ENCODE measurements at regions of chr5 and their contacts with region 1.

Region 1: DNA sequence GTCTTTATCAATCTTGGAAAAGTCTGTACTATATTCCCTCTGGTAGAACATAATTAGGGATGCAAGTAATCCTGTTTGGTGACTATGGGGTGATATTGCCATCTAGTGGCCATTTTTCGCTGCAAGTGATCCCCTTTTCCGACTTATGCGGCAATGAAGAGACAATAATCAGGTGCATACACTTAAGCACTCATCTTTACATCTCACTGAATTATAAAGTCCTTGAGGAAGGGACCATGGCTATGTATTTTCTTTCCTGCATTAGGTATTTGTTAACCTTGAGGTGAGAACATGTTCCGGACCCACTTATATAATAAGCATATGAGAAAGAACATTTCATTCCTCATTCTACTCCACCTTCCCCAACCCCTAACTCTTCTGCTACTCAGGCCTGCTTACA is 19.6 kb upstream of the LIX1 start:
- DNase-seq: peak; percentile 44 to 61 (median 59)
- H3K4me3 ChIP-seq: no peak overlapping the region
- H3K4me3 Mint-ChIP-seq: no peak overlapping the region
- H3K27ac ChIP-seq: no peak overlapping the region
- H3K27ac Mint-ChIP-seq: peak overlapping the region in 4 of 7 donors; percentile 18 to 83 (median 45)
- H3K4me1 ChIP-seq: peaks cover 3% of the 10 kb centered on the region
- H3K4me1 Mint-ChIP-seq: peaks cover 3 to 18% (median 6%) of the 10 kb centered on the region in 4 donors
- H3K27me3 ChIP-seq: no peaks in the 10 kb centered on the region
- H3K27me3 Mint-ChIP-seq: no peaks in the 10 kb centered on the region

Region 2: DNA sequence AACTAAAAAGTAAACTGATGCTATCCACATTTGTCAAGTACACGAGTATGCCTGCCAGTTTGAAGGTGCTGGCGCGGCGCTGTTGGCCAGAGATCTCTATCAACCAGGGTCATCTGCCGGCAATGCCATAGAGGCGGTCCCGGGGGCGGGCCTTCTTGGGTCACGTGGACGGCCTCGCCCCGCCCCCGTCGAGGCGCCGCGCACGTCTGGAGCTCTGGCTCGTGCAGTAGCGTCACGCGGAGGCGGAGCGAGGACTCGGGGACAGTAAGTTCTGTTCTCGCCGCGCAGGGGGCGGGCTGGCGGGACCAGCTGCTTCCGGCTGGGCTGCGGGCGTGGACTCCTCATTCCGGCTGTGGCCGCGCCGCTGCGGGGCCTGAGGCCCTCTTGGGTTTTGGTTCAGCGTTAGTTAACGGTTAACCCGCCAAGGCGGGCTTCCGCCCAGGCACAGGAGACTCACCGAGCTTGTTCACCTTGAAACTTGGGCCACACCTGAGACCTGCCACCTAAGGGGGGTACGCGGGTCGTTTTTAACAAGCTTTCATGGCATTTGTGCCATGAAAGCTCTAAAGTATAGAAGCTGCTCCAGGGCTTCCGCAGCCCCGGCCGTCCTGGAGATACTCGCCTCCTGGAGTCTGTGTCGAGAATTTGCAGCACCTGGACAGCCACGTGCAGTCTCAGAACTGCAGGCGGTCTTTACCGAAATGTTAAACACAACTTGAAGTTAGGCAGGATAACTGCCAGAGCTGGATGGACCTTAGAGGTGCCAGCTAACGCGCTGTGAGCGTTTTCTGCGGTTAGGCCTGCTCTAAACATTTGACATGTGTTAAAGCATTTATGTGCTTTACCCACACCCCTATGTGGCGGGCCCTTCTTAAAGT is 1515.3 kb before region 1 on chr5 and contains the start of gene RFESD:
- CTCF ChIA-PET with region 1: no interaction called
- POLR2A ChIA-PET with region 1: no interaction called
- intact Hi-C with region 1: loop called (anchors 10 kb)
- DNase-seq: peak; percentile 91 to 95 (median 92)
- H3K4me3 ChIP-seq: peak within 1 kb of the TSS; percentile 71 to 94
- H3K4me3 Mint-ChIP-seq: peak within 1 kb of the TSS; percentile 87 to 93 (median 89)
- H3K27ac ChIP-seq: peak within 1 kb of the TSS; percentile 84
- H3K27ac Mint-ChIP-seq: peak within 1 kb of the TSS; percentile 57 to 94 (median 93)
- H3K4me1 ChIP-seq: peaks cover 31% of the 10 kb centered on the region
- H3K4me1 Mint-ChIP-seq: peaks cover 20 to 42% (median 26%) of the 10 kb centered on the region in 4 donors
- H3K27me3 ChIP-seq: no peaks in the 10 kb centered on the region
- H3K27me3 Mint-ChIP-seq: no peaks in the 10 kb centered on the region
- total RNA-seq, gene RFESD: 9.1 to 9.3 TPM

Region 3: DNA sequence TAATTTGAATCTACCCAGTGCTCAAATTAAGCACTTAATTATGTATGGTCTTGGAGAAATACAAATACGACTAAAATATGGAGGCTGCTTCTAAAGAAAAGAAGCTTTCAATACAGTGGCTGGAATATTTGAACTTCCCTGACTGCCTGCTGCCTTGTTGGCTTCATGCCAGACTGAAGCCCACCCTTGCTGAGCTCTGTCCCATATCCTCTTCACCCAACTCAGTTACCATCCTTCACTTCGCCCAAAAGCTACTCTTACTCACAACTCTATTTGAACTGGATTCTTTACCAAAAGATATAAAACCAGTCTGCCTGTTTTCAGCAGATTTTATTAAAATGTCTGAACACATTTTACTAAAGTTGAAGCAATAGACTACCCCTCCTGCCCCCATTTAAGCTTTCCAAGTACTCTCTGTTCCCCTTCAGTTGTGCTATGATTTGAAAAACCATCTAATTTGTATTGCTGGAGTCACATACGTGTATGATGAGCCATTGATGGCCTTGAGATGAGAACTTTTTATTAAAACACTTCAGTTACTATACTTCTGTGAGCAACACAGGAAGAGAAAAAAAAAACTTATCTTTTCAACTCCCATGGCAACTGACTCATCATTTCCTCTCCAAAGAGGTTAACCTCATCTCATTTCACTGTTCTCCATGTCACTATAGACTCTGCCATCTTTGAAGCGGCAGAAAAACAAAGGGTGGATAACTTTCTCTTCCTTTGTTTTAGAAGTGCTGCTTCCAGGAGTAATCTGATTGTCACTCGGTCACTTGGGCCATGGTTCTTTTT is 624.9 kb before region 1 on chr5:
- CTCF ChIA-PET with region 1: no interaction called
- POLR2A ChIA-PET with region 1: no interaction called
- intact Hi-C with region 1: loop called (anchors 5 kb)
- DNase-seq: peak; percentile 48 to 83 (median 75)
- H3K4me3 ChIP-seq: peak overlapping the region in 1 of 2 donors; percentile 1
- H3K4me3 Mint-ChIP-seq: peak overlapping the region; percentile 18 to 93 (median 76)
- H3K27ac ChIP-seq: peak overlapping the region; percentile 38
- H3K27ac Mint-ChIP-seq: peak overlapping the region; percentile 83 to 100 (median 94)
- H3K4me1 ChIP-seq: peaks cover 30% of the 10 kb centered on the region
- H3K4me1 Mint-ChIP-seq: peaks cover 23 to 41% (median 30%) of the 10 kb centered on the region in 4 donors
- H3K27me3 ChIP-seq: no peaks in the 10 kb centered on the region
- H3K27me3 Mint-ChIP-seq: no peaks in the 10 kb centered on the region

Region 4: GRCh38 chr5:96876292-96876850 is 285.7 kb before region 1 on chr5 and contains the start of gene ERAP2:
- CTCF ChIA-PET with region 1: interaction called, 218 read pairs
- POLR2A ChIA-PET with region 1: no interaction called
- intact Hi-C with region 1: no loop called
- DNase-seq: peak; percentile 49 to 69 (median 65)
- H3K4me3 ChIP-seq: peak within 1 kb of the TSS; percentile 79 to 92
- H3K4me3 Mint-ChIP-seq: peak within 1 kb of the TSS; percentile 90 to 99 (median 96)
- H3K27ac ChIP-seq: peak within 1 kb of the TSS; percentile 79
- H3K27ac Mint-ChIP-seq: peak within 1 kb of the TSS; percentile 89 to 99 (median 97)
- H3K4me1 ChIP-seq: peaks cover 61% of the 10 kb centered on the region
- H3K4me1 Mint-ChIP-seq: peaks cover 45 to 80% (median 49%) of the 10 kb centered on the region in 4 donors
- H3K27me3 ChIP-seq: no peaks in the 10 kb centered on the region
- H3K27me3 Mint-ChIP-seq: no peaks in the 10 kb centered on the region
- total RNA-seq, gene ERAP2: 107 to 112 TPM

Region 5: DNA sequence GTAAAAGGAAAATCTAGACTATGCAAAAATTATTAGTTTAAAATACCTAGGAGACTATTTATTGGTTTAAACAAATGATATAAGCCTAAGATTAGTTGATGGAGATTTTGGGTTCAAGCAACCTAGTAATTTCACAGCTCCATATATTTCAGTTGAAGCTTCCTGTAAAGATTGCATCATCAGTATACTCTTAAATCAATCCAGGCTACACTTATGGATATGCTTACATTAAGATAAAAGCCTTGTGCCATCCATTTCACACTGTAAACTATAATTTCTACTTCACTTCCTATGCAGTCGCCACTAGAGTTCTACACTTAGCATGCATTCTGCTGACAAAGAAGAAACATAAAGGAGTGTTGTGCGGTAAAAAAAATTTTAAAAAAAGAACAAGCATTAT is 12.3 kb before region 1 on chr5:
- CTCF ChIA-PET with region 1: interaction called, 11 read pairs
- POLR2A ChIA-PET with region 1: no interaction called
- intact Hi-C with region 1: no loop called
- DNase-seq: no peak
- H3K4me3 ChIP-seq: no peak overlapping the region
- H3K4me3 Mint-ChIP-seq: no peak overlapping the region
- H3K27ac ChIP-seq: no peak overlapping the region
- H3K27ac Mint-ChIP-seq: no peak overlapping the region
- H3K4me1 ChIP-seq: no peaks in the 10 kb centered on the region
- H3K4me1 Mint-ChIP-seq: no peaks in the 10 kb centered on the region
- H3K27me3 ChIP-seq: no peaks in the 10 kb centered on the region
- H3K27me3 Mint-ChIP-seq: no peaks in the 10 kb centered on the region